GM10248 (cell line): ENCODE measurements at regions of chr2 and their contacts with region 1.

Region 1: GRCh38 chr2:63893163-63893562 is 51.5 kb downstream of the UGP2 start:
- DNase-seq: no peak
- CTCF ChIP-seq: no peak

Region 2: DNA sequence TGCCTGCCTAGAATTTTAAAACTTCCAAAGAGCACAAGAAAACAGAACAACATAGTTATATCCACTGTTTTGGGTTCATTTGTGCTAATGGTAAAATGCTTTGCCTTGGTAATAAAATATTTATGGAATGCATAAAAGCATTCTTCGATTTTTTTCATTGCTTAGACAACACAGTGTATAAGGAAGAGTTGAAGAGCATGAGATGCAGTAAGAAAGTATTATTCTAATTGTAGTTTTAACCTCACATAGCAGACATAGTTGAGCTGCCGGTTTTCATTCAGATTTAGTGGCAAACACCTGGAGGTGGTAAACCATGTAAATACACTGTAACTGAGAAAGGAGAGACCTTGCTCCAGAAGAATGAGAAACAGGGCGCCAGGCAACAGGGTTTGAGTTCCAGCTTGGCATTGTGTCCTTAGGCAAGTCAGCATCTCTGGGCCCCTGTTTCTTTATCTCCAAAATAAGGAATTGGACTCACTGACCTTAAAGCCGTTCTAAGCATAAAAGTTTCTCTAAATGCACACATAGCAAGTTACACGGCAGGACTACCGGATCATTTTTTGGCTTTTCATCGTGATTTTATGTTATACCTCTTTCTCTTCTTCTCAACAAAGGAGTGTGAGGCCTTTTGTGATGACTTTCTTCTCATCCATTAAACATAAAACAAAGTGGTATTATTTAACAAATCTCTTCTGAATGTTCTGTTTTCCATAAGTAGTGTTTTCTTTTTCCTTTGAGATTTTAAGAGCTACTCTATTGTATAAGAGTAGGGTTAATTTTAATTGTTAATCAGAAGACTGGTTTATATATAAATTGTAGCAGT is 43.6 kb before region 1 on chr2:
- CTCF ChIA-PET with region 1: no interaction called
- POLR2A ChIA-PET with region 1: no interaction called
- DNase-seq: no peak
- CTCF ChIP-seq: no peak

Region 3: GRCh38 chr2:63871864-63872263 is 21.3 kb before region 1 on chr2:
- CTCF ChIA-PET with region 1: no interaction called
- POLR2A ChIA-PET with region 1: no interaction called
- DNase-seq: no peak
- CTCF ChIP-seq: no peak

Region 4: GRCh38 chr2:63882395-63883105 is 10.6 kb before region 1 on chr2:
- CTCF ChIA-PET with region 1: interaction called, 10 read pairs
- POLR2A ChIA-PET with region 1: no interaction called
- DNase-seq: no peak
- CTCF ChIP-seq: no peak

Region 5: DNA sequence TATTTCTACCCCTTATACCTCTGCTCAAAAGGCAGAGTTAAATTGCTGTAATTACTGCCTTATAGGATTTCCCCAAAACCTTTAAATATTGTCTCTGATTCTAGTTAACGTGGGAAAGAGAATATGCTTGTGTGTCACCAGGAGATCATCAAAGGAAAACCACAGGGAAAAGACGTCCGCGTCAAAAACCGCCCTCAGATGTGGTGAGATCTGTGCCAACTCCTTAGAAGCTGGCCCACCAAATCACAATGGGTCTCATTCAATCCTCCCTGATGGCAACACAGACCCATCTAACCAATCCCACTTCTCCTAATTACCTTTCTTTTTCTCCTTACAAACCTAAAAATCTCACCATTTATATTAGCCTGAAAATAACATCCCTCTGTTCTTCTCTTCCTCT is 100.7 kb after region 1 on chr2:
- CTCF ChIA-PET with region 1: no interaction called
- POLR2A ChIA-PET with region 1: no interaction called
- DNase-seq: no peak
- CTCF ChIP-seq: no peak